ENCODE measurements at regions of chr12 and their contacts with region 1.

Region 1: GRCh38 chr12:130460611-130461478 is 123.2 kb downstream of the PIWIL1 start:
- DNase-seq: no peak
- H3K4me3 ChIP-seq: no peak overlapping the region
- H3K27ac ChIP-seq: no peak overlapping the region
- H3K4me1 ChIP-seq: no peaks in the 10 kb centered on the region
- CTCF ChIP-seq: no peak

Region 2: DNA sequence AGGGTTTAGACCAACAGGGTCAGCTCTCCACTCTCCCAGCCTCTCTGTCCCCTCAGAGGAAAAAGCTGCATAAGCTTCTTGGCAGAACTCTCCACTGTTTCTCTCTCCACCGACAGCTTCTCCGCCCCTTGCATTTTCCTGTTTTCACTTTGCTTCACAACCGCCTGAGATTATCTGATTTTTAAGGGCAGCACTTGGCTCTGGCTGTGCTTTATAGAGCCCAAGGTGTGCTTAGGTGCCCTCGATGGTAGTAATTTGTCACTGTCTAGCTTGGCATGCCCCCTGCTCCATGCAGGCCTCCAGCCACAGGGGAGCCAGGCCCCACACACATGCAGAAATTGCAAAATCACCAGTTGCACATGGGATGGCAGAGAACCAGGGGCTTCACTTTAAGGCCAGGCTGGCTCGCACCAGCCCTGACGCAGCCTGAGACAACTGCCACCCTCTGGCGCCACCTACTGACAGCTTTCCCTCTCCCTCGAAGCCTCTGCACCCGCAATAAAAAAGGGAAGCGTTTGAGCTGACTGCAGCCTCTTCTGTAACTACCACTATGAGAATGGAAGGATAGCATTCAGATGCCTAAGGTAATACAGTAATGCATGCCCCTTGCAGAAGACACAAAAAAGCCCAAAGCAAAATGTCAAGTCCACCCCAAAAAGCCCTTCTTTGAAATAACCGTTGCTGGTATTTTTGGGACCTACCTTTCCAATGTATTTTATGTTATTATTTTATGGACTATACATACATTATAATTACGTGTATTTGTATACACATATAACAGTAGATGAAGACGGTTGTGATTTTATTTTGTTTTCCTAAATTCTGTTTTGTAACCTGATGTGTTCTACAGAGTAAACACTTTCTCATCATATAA is 287.3 kb after region 1 on chr12:
- CTCF ChIA-PET with region 1: no interaction called
- POLR2A ChIA-PET with region 1: no interaction called
- intact Hi-C with region 1: loop called (anchors 10 kb)
- DNase-seq: peak; percentile 78
- H3K4me3 ChIP-seq: no peak overlapping the region
- H3K27ac ChIP-seq: no peak overlapping the region
- H3K4me1 ChIP-seq: peaks cover 10% of the 10 kb centered on the region
- CTCF ChIP-seq: peak; percentile 90

Measured in OCI-LY7 (cell line).